ENCODE measurements at regions of chr6 and their contacts with region 1.

Region 1: GRCh38 chr6:138588805-138589434 is 89.6 kb upstream of the NHSL1 start:
- DNase-seq: peak; percentile 87
- H3K4me3 Mint-ChIP-seq: no peak overlapping the region
- H3K27ac Mint-ChIP-seq: no peak overlapping the region
- H3K4me1 Mint-ChIP-seq: peaks cover 18% of the 10 kb centered on the region
- H3K27me3 Mint-ChIP-seq: peaks cover 1% of the 10 kb centered on the region

Region 2: DNA sequence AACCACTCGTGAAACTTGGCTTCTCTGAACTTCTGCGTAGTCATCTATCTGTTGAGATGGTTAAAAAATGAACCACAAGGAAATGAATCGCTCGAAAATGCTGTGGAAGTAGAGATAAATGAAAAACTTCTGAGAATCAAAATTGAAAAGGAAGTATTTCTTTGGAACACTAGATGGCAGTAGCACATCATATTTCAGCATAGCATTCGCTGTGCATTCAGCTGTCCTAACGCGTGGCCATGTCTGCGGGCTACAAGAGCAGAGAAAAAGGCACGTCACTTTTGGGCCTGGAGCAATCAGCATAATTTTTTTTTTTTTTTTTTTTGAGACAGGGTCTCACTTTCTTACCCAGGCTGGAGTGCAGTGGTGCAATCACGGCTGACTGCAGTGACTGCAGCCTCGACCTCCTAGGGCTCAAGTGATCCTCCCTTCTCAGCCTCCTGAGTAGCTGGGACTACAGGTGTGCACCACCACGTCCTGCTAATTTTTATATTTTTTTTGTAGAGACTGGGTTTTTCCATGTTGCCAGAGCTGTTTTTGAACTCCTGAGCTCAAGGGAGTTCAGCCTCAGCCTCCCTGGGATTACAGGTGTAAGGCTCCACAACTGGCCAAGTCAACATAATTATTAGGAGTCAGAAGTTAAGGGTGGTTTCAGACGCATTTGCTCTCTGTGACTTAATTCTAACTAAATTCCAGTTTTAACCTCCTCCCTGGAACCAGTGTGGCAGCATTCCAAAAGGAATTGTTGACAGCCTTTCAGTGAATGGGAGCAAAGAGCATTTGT is 472.9 kb before region 1 on chr6:
- intact Hi-C with region 1: loop called (anchors 5 kb)
- DNase-seq: peak; percentile 81
- H3K4me3 Mint-ChIP-seq: no peak overlapping the region
- H3K27ac Mint-ChIP-seq: no peak overlapping the region
- H3K4me1 Mint-ChIP-seq: peaks cover 7% of the 10 kb centered on the region
- H3K27me3 Mint-ChIP-seq: peaks cover 44% of the 10 kb centered on the region

Region 3: GRCh38 chr6:138428944-138429598 is 159.8 kb before region 1 on chr6:
- intact Hi-C with region 1: loop called (anchors 5 kb)
- DNase-seq: peak; percentile 75
- H3K4me3 Mint-ChIP-seq: no peak overlapping the region
- H3K27ac Mint-ChIP-seq: no peak overlapping the region
- H3K4me1 Mint-ChIP-seq: no peaks in the 10 kb centered on the region
- H3K27me3 Mint-ChIP-seq: peaks cover 1% of the 10 kb centered on the region

Region 4: GRCh38 chr6:138692058-138692977 is 103.4 kb after region 1 on chr6:
- intact Hi-C with region 1: loop called (anchors 1 kb)
- DNase-seq: peak; percentile 88
- H3K4me3 Mint-ChIP-seq: peak overlapping the region; percentile 64
- H3K27ac Mint-ChIP-seq: no peak overlapping the region
- H3K4me1 Mint-ChIP-seq: peaks cover 3% of the 10 kb centered on the region
- H3K27me3 Mint-ChIP-seq: peaks cover 56% of the 10 kb centered on the region

Region 5: DNA sequence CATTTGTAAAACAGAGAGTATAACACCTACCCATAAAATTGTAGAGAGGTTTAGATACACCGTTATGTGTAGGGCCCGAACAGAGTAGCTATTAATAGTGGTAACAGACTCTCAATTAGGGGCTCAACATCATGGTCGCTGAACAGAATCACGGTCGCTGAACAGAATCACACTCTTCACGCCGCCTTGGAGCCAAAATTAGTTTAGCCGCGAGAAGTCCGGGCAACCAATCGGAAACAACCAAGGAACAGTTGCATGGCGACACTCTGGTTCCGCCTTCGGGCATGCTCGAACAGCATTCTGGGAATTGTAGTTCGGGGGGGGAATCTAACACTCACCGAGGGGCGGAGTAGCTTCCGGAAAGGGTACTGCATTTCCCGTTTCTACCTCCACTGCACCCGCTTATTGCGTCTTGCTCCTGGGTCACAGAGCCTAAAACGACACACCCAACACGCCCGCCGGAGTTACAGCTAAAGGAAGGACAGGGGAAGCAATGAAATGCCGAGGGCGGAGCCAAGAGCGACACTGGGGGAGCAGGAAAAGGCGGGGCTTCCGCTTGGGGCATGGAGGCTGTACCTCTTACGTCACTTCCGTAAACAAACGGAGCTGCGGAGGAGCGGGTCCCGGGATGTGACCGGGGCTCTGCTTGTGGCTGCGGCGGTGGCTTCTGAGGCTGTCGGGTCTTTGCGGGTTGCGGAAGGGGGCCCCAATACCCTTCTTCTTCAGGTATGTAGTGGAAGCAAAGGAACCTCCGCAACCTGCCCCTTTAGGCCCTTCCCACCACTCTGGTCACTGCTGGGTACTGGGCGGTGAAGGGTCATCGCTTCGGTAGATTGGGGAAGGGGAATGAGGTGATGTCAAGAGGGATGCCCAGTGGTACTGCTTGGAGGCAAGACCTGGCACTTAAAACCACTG is 184.5 kb after region 1 on chr6 and contains the start of gene CCDC28A:
- intact Hi-C with region 1: loop called (anchors 1 kb)
- DNase-seq: peak; percentile 97
- H3K4me3 Mint-ChIP-seq: peak within 1 kb of the TSS; percentile 93
- H3K27ac Mint-ChIP-seq: peak within 1 kb of the TSS; percentile 99
- H3K4me1 Mint-ChIP-seq: peaks cover 20% of the 10 kb centered on the region
- H3K27me3 Mint-ChIP-seq: no peaks in the 10 kb centered on the region
- total RNA-seq, gene CCDC28A: 17.5 and 19.2 TPM in 2 replicates

Region 6: DNA sequence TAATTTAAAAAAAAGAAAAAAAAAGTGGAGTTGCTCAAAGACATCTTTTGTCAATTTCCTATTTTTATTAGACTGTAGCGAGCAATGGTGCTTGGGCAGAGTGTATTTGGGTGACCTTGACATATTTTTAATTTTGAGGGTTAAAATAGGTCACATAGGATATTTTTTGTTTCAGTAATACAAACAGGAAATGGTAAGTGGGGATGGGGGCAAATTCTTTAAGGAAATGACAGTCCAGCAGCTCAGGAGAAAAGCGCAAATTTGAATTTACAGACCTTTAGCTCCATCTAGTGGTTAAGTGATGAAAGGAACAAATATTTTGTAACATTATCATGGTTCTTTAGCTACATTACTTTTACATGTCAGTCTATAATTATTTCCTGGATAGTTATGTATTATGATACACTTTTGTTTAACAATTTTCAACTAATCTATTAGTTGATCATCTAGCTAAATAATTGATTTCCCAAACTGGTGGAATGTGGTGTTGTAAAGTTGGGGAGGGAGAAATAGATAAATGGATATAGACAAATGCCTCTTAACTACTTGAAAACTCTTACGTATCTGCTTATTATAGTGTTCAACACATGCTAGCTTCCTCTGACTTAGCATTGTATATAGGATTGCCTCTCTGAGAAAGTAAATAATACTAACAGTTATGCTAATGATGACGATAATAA is 775.5 kb after region 1 on chr6:
- intact Hi-C with region 1: loop called (anchors 2 kb)
- DNase-seq: peak; percentile 68
- H3K4me3 Mint-ChIP-seq: no peak overlapping the region
- H3K27ac Mint-ChIP-seq: no peak overlapping the region
- H3K4me1 Mint-ChIP-seq: peaks cover 30% of the 10 kb centered on the region
- H3K27me3 Mint-ChIP-seq: peaks cover 4% of the 10 kb centered on the region

Measured in activated CD4-positive, alpha-beta T cell treated with anti-CD3 and anti-CD28 coated beads, Interleukin-2, amount 10 ng/mL, durations not matched to agents 24 days and 14 days (primary cell).